Heart left ventricle (tissue), 16 donors: ENCODE measurements at regions of chr17 and their contacts with region 1.

Region 1: DNA sequence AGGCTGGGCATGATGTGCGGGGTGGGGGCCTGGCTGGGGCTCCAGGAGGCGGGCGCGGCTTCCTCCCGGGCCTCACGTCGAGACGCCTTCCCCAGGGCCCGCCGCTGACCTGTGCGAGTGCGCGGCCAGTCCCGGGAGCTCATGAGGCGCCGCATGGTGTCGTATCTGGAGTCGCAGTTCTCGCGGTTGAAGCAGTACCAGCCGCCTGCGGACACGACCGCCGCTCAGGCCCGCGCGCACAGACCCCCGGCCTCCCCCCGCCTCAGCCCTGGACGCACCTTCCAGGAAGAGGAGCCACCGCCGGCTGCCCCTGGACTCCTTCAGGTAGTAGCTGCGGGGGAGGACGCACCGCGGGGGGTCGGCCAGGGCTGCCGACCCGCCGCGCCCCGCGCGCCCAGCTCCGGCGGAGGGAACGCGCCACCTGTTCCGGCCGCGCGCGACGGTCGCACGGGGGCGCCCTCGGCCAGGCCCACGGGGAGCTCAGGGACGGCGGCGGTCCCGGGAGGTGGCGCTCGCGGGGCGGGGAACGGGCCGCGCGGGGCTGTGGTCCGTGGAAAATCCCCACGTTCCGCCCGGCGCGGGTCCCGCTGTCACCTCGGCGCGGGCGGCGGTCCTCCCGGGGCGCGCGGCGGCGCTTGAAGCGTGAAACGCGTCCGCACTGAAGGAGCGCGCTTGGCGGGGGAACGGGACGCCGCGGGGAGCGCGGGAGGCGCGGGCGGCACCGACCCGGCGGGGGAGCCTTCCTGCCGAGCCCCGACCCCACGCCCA is 1.4 kb downstream of the NOTUM start:
- DNase-seq: peak; percentile 67 to 88 (median 78)
- ATAC-seq: peak; percentile 62 to 95 (median 86)
- H3K4me3 ChIP-seq: peak overlapping the region; percentile 18 to 55 (median 44)
- H3K27ac ChIP-seq: no peak overlapping the region
- H3K4me1 ChIP-seq: peaks cover 2 to 35% (median 11%) of the 10 kb centered on the region in 12 donors
- H3K27me3 ChIP-seq: peaks cover 21 to 79% (median 53%) of the 10 kb centered on the region in 9 donors
- CTCF ChIP-seq: peak; percentile 35 to 95 (median 80)
- POLR2A ChIP-seq: peak in 1 of 2 donors; percentile 33

Region 2: GRCh38 chr17:81941790-81942553 is 17.6 kb before region 1 on chr17:
- intact Hi-C with region 1: no loop called
- DNase-seq: peak in 4 of 5 donors; percentile 72 to 85 (median 76)
- ATAC-seq: peak; percentile 74 to 89 (median 80)
- H3K4me3 ChIP-seq: peak overlapping the region in 11 of 12 donors; percentile 27 to 60 (median 47)
- H3K27ac ChIP-seq: peak overlapping the region in 11 of 12 donors; percentile 12 to 92 (median 77)
- H3K4me1 ChIP-seq: peaks cover 0 to 44% (median 22%) of the 10 kb centered on the region in 12 donors
- H3K27me3 ChIP-seq: peaks cover 0 to 11% (median 0%) of the 10 kb centered on the region in 9 donors
- CTCF ChIP-seq: no peak
- POLR2A ChIP-seq: no peak

Region 3: DNA sequence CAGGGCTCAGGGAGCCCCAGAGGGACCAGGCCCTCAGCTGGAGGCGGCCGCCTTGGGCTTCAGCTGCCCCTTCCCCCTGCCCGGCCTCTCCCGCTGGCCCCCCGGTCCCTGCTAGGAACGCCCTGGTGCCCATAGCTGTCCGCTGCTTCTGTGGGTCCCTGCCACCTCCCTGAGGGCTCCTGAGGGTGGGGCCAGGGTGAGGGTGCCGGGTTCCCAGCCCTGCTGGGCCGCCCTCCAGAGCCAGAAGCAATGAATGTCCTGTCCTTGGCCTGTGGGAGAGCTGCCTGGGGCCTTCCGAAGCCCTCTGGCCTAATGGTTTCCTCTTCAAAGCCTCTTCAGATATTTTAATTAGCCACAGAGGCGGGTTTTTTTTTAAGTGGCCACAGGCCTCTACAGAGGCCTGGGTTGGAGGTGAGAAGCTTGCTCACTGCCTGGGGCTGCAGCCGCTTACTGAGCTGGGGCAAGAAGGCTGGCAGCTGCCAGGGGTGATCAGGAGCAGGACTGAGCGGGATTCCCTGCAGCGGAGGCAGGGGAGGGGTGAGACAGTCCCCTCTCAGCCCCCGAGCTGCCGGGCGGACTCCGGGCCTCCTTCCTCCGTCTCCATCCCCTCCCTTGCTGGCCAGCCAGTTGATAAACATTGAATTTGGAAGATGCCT is 53.2 kb after region 1 on chr17:
- intact Hi-C with region 1: no loop called
- DNase-seq: peak in 2 of 5 donors; percentile 56 to 68
- ATAC-seq: peak; percentile 38 to 60 (median 41)
- H3K4me3 ChIP-seq: no peak overlapping the region
- H3K27ac ChIP-seq: peak overlapping the region; percentile 67 to 96 (median 90)
- H3K4me1 ChIP-seq: peaks cover 0 to 43% (median 10%) of the 10 kb centered on the region in 12 donors
- H3K27me3 ChIP-seq: no peaks in the 10 kb centered on the region
- CTCF ChIP-seq: no peak
- POLR2A ChIP-seq: no peak

Region 4: DNA sequence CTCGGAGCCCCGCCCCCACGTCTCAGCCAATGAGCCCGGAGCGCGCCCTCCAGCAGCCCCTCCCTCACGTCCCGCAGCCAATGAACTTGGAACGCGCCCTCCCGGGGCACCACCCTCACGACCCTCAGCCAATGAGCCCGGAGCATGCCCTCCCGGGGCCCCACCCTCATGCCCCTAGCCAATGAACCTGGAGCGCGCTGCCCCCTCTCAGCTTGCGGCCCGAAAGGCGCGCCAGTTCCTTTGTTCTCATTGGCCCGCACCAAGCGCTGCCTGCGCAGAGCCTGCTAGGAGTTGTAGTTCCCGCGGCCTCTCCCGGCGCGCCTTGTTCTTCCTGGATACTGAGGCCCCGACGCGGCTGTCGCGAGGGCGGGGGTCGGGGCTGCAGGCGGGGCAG is 63.4 kb after region 1 on chr17 and contains the start of gene LRRC45:
- intact Hi-C with region 1: loop called (anchors 1 to 5 kb)
- DNase-seq: peak; percentile 100
- ATAC-seq: peak; percentile 94 to 98 (median 96)
- H3K4me3 ChIP-seq: peak within 1 kb of the TSS; percentile 77 to 99 (median 94)
- H3K27ac ChIP-seq: peak within 1 kb of the TSS in 11 of 12 donors; percentile 32 to 85 (median 73)
- H3K4me1 ChIP-seq: peaks cover 5 to 37% (median 23%) of the 10 kb centered on the region in 12 donors
- H3K27me3 ChIP-seq: no peaks in the 10 kb centered on the region
- CTCF ChIP-seq: no peak
- POLR2A ChIP-seq: no peak
- total RNA-seq, gene LRRC45: 2.9 to 7.5 (median 5.6) TPM

Region 5: DNA sequence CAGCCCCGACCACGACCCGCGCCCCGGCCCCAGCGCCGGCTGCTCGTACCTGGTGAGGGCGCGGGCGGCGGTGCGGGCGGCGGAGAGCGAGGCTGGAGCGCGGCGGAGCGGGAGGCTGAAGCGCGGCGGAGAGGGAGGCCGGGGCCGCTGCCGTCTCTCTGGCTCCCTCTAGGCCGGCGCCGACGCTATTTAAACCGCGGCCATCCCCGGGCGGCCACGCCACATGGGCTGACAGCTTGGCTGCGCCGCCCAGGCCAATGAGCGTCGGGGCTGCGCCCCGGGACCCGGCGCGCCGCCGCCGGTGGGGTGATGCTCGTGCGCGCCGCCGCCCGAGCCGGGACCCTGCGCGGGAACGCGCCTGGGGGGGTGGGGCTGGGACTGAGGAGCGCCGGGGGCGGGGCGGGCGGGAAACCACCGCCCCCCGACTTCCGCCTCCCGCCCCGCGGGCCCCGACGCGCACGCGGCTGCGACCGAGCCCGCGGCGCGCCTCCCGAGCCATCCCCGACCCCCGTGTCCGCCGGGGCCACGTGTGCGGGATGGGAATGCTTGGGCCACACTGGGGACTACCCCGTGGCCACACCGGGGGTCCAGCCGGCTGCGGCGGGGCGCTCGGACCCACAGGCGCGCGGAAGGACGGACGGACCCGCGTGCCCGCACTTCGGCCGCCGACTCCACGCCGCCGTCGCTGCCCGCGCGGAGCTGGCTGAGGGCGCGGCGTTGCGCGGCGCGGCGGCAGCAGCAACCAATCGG is 138.7 kb after region 1 on chr17 and contains the start of gene FASN:
- intact Hi-C with region 1: no loop called
- DNase-seq: peak; percentile 92 to 96 (median 93)
- ATAC-seq: peak; percentile 66 to 84 (median 80)
- H3K4me3 ChIP-seq: peak within 1 kb of the TSS; percentile 65 to 95 (median 82)
- H3K27ac ChIP-seq: peak within 1 kb of the TSS; percentile 69 to 99 (median 96)
- H3K4me1 ChIP-seq: peaks cover 0 to 43% (median 23%) of the 10 kb centered on the region in 12 donors
- H3K27me3 ChIP-seq: no peaks in the 10 kb centered on the region
- CTCF ChIP-seq: peak in 11 of 12 donors; percentile 6 to 61 (median 45)
- POLR2A ChIP-seq: peak; percentile 95 to 98
- total RNA-seq, gene FASN: 6.9 to 103 (median 18.9) TPM

Region 6: DNA sequence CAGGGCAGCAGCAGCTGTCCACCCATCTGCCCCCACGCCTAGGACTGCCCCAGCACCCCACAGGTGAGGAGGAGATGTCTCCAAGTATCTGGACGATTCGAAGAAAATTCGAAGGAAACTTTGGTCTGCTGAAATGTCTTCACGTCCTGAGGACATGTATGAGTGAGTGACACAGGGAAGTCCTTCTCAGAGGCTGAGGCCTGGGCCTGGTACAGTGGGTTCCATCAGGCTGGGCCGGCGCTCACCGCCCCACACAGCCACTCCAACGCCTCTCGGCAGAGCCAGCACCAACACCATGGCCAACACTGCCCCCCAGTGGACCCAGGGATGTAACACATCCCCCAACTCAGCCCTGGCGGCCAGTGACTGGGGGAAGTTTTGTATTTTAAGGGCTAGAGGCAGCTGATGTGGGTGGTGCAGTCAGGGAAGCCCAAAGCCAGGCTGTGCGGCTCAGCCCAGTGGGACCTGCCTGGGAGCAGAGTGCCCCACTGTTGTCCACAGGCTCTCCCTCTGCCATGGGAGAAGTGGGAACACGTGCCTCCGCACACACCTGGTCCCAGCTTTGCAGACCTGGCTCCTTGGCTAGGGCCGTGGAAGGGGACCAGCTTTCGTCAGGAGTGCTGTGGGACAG is 194.3 kb after region 1 on chr17:
- intact Hi-C with region 1: loop called in 7 of 10 experiments (anchors 2 to 10 kb)
- DNase-seq: peak; percentile 71 to 91 (median 77)
- ATAC-seq: peak; percentile 88 to 94 (median 92)
- H3K4me3 ChIP-seq: no peak overlapping the region
- H3K27ac ChIP-seq: no peak overlapping the region
- H3K4me1 ChIP-seq: peaks cover 0 to 5% (median 0%) of the 10 kb centered on the region in 12 donors
- H3K27me3 ChIP-seq: no peaks in the 10 kb centered on the region
- CTCF ChIP-seq: peak; percentile 74 to 95 (median 88)
- POLR2A ChIP-seq: no peak